GM12878 (cell line): ENCODE measurements at regions of chr4 and their contacts with region 1.

Region 1: GRCh38 chr4:54322818-54323417 is 93.8 kb downstream of the PDGFRA start:
- DNase-seq: no peak
- ATAC-seq: peak; percentile 95
- H3K4me3 ChIP-seq: no peak overlapping the region
- H3K27ac ChIP-seq: no peak overlapping the region
- H3K4me1 ChIP-seq: no peaks in the 10 kb centered on the region
- H3K27me3 ChIP-seq: no peaks in the 10 kb centered on the region
- CTCF ChIP-seq: peak; percentile 71 to 83 (median 75)
- EP300 ChIP-seq: no peak
- POLR2A ChIP-seq: no peak
- RAD21 ChIP-seq: peak; percentile 88

Region 2: DNA sequence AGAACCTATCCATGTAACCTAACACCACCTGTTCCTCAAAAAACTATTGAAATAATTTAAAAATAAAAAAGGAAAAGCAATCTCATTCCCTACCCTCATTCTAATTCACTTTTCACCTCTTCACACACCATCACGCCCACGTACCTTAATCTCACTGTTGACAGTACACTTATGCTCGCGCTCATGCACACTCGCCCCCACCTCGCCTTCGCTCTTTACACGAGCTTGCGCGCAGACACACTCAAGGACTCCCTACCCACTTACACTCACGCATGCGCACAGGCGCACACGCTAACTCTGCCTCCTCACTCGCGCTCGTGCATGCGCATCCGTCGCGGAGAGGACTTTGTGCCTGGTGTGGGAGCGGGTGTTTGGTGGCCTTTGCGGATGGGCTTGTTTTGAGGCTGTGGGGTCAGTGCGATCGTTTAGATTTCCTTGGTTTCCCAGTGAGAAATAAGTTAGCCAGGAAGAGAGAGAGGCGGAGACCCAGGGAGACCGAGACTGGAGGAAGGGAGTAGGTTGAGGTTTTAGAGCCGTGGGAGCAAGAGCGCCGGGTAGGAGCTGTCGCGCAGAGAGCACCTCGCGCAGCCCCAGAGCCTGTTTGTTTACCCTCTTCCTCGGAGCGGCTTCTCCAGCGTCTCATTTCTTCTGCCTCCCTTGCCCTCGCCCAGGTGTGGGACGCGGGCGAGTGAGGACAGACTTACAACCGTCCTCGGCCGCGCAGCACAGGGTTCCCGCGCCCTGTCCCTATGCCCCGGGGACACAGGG is 231.1 kb before region 1 on chr4:
- CTCF ChIA-PET with region 1: no interaction called
- POLR2A ChIA-PET with region 1: no interaction called
- RAD21 ChIA-PET with region 1: no interaction called
- SMC1A ChIA-PET with region 1: no interaction called
- in situ Hi-C with region 1: no loop called
- intact Hi-C with region 1: no loop called
- DNase-seq: peak; percentile 35
- ATAC-seq: peak; percentile 90
- H3K4me3 ChIP-seq: peak overlapping the region; percentile 72
- H3K27ac ChIP-seq: no peak overlapping the region
- H3K4me1 ChIP-seq: peaks cover 8% of the 10 kb centered on the region
- H3K27me3 ChIP-seq: peaks cover 7 to 11% of the 10 kb centered on the region in 2 experiments; a peak in 3 of 4 replicates
- CTCF ChIP-seq: no peak
- EP300 ChIP-seq: no peak
- POLR2A ChIP-seq: no peak
- RAD21 ChIP-seq: no peak

Region 3: GRCh38 chr4:54433686-54434085 is 110.8 kb after region 1 on chr4:
- CTCF ChIA-PET with region 1: interaction called, 31 read pairs
- POLR2A ChIA-PET with region 1: no interaction called
- RAD21 ChIA-PET with region 1: no interaction called
- SMC1A ChIA-PET with region 1: interaction called, 4 read pairs
- in situ Hi-C with region 1: loop called (anchors 5 kb)
- intact Hi-C with region 1: loop called (anchors 2 kb)
- DNase-seq: no peak
- ATAC-seq: 0 out of 3 replicates have a peak, but pooled peaks have one; percentile 34
- H3K4me3 ChIP-seq: no peak overlapping the region
- H3K27ac ChIP-seq: no peak overlapping the region
- H3K4me1 ChIP-seq: no peaks in the 10 kb centered on the region
- H3K27me3 ChIP-seq: no peaks in the 10 kb centered on the region
- CTCF ChIP-seq: peak; percentile 12 to 46 (median 26); a peak in 5 of 6 replicates
- EP300 ChIP-seq: no peak
- POLR2A ChIP-seq: no peak
- RAD21 ChIP-seq: no peak

Region 4: DNA sequence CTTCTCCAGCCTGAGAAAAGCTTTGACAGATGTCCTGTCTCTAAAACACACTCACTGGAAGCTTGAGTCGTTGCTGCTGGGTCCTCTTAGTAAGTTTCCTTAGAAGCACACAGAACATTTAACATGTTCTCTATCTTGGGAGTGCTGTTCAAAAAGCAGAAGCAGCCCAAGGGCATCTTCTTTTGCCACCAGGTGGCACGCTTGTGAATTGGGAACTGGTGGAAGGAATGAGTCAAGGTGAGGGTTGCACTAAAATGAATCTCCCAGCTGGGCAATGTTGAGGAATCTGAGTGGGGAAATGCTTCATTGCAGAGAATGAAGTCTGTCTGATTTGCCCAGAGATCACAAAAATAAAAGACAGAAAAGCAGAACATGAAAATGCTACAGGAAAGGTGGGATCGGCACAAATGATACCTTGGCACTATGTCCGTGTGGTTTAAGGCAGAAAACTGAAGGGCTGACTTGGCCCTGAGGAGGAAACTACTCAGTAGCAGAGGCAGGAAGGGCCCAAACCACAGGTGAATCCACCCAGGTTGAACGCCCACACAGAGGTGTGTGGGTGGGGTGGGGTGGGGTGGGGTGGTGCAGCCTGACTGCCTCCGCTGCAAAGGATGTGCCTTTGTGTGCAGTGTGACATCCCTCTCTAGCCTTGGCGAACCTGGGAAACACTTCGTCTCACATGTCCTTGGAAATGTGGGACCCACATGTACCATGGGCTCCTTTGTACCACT is 360.9 kb after region 1 on chr4:
- CTCF ChIA-PET with region 1: no interaction called
- POLR2A ChIA-PET with region 1: no interaction called
- RAD21 ChIA-PET with region 1: no interaction called
- SMC1A ChIA-PET with region 1: no interaction called
- in situ Hi-C with region 1: no loop called
- intact Hi-C with region 1: loop called (anchors 2 kb)
- DNase-seq: no peak
- ATAC-seq: peak; percentile 76
- H3K4me3 ChIP-seq: no peak overlapping the region
- H3K27ac ChIP-seq: no peak overlapping the region
- H3K4me1 ChIP-seq: peaks cover 2% of the 10 kb centered on the region; the same call in 1 of the 2 replicates
- H3K27me3 ChIP-seq: no peaks in the 10 kb centered on the region
- CTCF ChIP-seq: peak; percentile 52 to 61 (median 60); a peak in 5 of 6 replicates
- EP300 ChIP-seq: no peak
- POLR2A ChIP-seq: no peak
- RAD21 ChIP-seq: peak; percentile 64

Region 5: DNA sequence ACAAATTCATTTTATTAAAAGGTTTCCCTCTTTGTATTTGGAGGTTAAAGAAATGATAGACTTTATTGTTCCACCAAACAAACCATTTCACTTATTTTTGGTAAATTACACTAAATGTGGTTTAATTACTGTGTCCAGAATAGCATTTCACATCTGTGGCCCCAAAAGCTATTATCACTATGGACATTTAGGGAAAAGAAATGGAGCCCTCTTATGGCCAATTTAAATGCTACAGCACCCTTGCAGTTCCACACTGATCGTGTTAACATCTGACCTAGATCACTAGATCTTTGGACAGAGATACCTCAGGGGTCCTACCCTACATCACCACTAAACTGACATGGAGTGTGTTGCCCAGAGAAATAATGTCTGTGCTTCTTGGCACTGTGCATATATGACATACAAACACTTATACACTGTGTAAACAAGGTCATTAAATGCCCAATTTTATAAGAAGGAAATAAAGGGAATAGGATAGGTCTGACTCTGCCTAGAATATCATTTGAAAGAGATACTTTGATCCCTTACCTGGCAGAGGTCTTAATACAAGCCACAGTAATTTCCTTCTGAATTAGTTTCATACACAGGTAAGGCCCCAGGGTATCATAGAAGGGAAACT is 638.5 kb after region 1 on chr4:
- CTCF ChIA-PET with region 1: interaction called, 7 read pairs
- POLR2A ChIA-PET with region 1: no interaction called
- RAD21 ChIA-PET with region 1: no interaction called
- SMC1A ChIA-PET with region 1: no interaction called
- in situ Hi-C with region 1: loop called (anchors 10 kb)
- intact Hi-C with region 1: loop called (anchors 2 kb)
- DNase-seq: no peak
- ATAC-seq: peak; percentile 49
- H3K4me3 ChIP-seq: no peak overlapping the region
- H3K27ac ChIP-seq: no peak overlapping the region
- H3K4me1 ChIP-seq: no peaks in the 10 kb centered on the region
- H3K27me3 ChIP-seq: no peaks in the 10 kb centered on the region
- CTCF ChIP-seq: peak in 2 of 3 experiments; percentile 46; a peak in 4 of 6 replicates
- EP300 ChIP-seq: no peak
- POLR2A ChIP-seq: no peak
- RAD21 ChIP-seq: peak; percentile 53

Region 6: GRCh38 chr4:55554453-55555030 is 1231.6 kb after region 1 on chr4:
- CTCF ChIA-PET with region 1: no interaction called
- POLR2A ChIA-PET with region 1: no interaction called
- RAD21 ChIA-PET with region 1: no interaction called
- SMC1A ChIA-PET with region 1: no interaction called
- in situ Hi-C with region 1: loop called (anchors 25 kb)
- intact Hi-C with region 1: no loop called
- DNase-seq: no peak
- ATAC-seq: peak; percentile 70
- H3K4me3 ChIP-seq: no peak overlapping the region
- H3K27ac ChIP-seq: no peak overlapping the region
- H3K4me1 ChIP-seq: no peaks in the 10 kb centered on the region
- H3K27me3 ChIP-seq: no peaks in the 10 kb centered on the region
- CTCF ChIP-seq: peak; percentile 31 to 47 (median 33); a peak in 4 of 6 replicates
- EP300 ChIP-seq: no peak
- POLR2A ChIP-seq: no peak
- RAD21 ChIP-seq: peak; percentile 63